ENCODE measurements at regions of chr15 and their contacts with region 1.

Region 1: DNA sequence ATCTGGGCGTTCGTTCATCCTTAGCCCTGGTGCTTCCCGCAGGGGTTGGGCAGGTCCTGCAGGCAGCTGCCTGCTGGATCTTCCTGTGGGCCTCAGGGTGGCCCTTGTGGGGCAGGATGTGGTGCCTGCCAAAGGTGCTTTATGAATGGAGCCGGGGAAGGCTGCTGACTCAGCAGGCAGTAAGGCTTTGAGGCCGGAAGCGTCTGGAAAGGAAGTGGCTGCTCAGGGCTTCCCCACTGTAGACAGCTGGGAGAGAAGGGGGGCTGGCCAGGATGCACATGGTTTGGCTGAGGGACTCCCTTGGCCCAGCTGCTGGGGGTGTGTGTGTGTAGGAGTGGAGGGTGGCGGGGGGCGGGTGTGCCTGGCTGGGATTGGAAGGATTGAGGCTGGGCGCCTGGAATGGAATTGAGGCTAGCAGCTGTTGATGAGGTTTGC is 12.9 kb downstream of the CD276 start:
- DNase-seq: peak; percentile 88
- H3K4me3 Mint-ChIP-seq: no peak overlapping the region
- H3K27ac Mint-ChIP-seq: peak overlapping the region; percentile 66
- H3K4me1 Mint-ChIP-seq: peaks cover 25% of the 10 kb centered on the region
- H3K27me3 Mint-ChIP-seq: peaks cover 84% of the 10 kb centered on the region

Region 2: DNA sequence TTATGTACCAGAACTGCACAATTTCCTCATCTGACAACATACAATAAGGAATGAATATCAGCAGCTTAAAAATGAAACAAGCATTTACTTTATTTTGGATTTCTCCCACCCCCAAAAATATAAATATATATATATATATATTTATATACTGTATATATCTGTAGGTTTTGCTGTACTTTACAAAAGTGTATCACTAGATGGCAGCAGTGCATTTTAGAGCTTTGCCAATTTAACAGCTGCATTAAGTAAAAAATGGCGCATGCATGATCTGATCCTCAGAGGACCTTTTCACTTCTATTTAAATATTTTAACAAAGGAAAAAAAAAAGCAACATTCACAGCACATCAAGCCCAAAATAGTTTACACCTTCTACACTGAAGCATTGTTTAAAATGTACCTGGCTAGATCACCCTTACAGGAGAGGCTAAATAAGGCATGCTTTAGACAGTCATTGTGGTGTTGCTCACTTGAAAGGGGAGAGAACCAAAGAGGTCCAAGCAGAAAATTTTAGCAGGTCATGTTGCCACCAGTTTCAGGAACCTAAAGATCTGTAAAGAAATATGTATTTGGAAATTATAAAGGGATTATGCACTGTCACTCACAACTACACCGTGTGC is 136.4 kb before region 1 on chr15:
- CTCF ChIA-PET with region 1: interaction called, 40 read pairs
- DNase-seq: no peak
- H3K4me3 Mint-ChIP-seq: no peak overlapping the region
- H3K27ac Mint-ChIP-seq: no peak overlapping the region
- H3K4me1 Mint-ChIP-seq: peaks cover 6% of the 10 kb centered on the region
- H3K27me3 Mint-ChIP-seq: no peaks in the 10 kb centered on the region

Region 3: GRCh38 chr15:73677146-73677607 is 19.9 kb before region 1 on chr15:
- CTCF ChIA-PET with region 1: interaction called, 50 read pairs
- DNase-seq: peak; percentile 68
- H3K4me3 Mint-ChIP-seq: no peak overlapping the region
- H3K27ac Mint-ChIP-seq: no peak overlapping the region
- H3K4me1 Mint-ChIP-seq: peaks cover 2% of the 10 kb centered on the region
- H3K27me3 Mint-ChIP-seq: peaks cover 39% of the 10 kb centered on the region

Region 4: DNA sequence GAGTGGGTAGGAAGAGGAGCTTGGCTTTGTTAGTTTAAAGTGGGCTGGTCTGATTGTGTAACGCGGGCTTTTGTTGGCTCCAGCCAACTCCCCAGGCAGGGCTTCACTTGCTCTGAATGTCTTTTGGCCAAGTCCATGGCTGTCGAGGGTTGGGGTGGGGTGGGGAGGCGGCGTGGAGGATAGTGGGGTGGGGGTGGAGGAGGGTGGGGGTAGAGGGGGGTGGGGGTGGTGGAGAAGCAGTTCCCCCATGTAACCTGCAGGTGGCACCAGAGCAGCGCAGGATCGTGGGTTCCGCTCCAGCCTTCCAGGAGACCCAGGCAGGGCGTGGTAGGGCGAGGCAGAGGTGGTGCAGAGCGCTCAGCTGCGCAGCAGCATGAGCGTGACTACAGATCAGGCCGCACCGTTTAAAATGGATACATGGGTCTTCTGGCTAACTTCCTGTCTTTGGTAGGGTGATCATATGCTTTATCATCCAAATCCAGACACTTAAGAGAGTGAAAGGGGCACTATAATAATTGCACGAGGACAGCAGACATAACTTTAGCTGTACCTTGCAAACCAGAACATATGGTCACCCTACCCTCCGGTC is 357.0 kb after region 1 on chr15:
- CTCF ChIA-PET with region 1: no interaction called
- DNase-seq: peak; percentile 83
- H3K4me3 Mint-ChIP-seq: no peak overlapping the region
- H3K27ac Mint-ChIP-seq: no peak overlapping the region
- H3K4me1 Mint-ChIP-seq: peaks cover 15% of the 10 kb centered on the region
- H3K27me3 Mint-ChIP-seq: peaks cover 4% of the 10 kb centered on the region